ENCODE measurements at regions of chr12 and their contacts with region 1.

Region 1: GRCh38 chr12:62998454-62998853 is 63.5 kb upstream of the PPM1H start:
- DNase-seq: peak; percentile 65 to 80
- H3K4me3 ChIP-seq: no peak overlapping the region
- H3K4me3 Mint-ChIP-seq: peak overlapping the region; percentile 67
- H3K27ac Mint-ChIP-seq: peak overlapping the region; percentile 91
- H3K4me1 ChIP-seq: peaks cover 43% of the 10 kb centered on the region
- H3K4me1 Mint-ChIP-seq: peaks cover 30% of the 10 kb centered on the region
- H3K27me3 ChIP-seq: no peaks in the 10 kb centered on the region
- H3K27me3 Mint-ChIP-seq: no peaks in the 10 kb centered on the region
- CTCF ChIP-seq: no peak

Region 2: DNA sequence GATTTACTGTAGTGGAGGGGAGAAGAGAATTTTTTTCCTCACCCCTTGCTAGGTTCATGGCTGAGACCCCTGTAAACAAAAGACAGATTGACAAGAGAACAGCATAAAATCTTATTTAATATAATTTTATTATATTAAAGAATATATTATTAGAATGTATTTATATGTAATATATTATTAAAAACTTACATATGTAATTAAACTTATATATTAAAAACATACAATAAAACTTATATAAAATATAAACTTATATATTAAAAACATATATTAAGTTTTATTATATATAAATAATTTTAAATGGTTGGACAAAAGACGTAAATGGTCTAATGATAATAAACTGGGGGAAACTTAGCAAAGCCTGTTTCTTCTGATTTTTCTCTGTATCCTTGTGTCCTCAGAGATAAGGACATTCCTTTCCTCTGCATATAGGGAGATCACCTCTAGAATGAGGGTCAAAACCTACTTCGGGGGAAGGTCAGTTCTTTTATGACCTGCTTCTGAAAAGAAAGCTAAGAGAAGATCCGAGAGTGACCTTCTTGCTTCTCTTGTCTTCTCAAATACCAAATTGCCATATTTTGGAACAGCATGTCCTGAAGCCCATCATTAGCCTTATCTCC is 54.6 kb before region 1 on chr12:
- CTCF ChIA-PET with region 1: no interaction called
- POLR2A ChIA-PET with region 1: no interaction called
- intact Hi-C with region 1: no loop called
- DNase-seq: no peak
- H3K4me3 ChIP-seq: no peak overlapping the region
- H3K4me3 Mint-ChIP-seq: no peak overlapping the region
- H3K27ac Mint-ChIP-seq: no peak overlapping the region
- H3K4me1 ChIP-seq: 0 out of 2 replicates have a peak, but pooled peaks cover 9% of the 10 kb centered on the region
- H3K4me1 Mint-ChIP-seq: peaks cover 26% of the 10 kb centered on the region
- H3K27me3 ChIP-seq: no peaks in the 10 kb centered on the region
- H3K27me3 Mint-ChIP-seq: no peaks in the 10 kb centered on the region
- CTCF ChIP-seq: no peak

Region 3: GRCh38 chr12:62983599-62984022 is 14.8 kb before region 1 on chr12:
- CTCF ChIA-PET with region 1: no interaction called
- POLR2A ChIA-PET with region 1: no interaction called
- intact Hi-C with region 1: loop called (anchors 1 kb)
- DNase-seq: no peak
- H3K4me3 ChIP-seq: no peak overlapping the region
- H3K4me3 Mint-ChIP-seq: no peak overlapping the region
- H3K27ac Mint-ChIP-seq: no peak overlapping the region
- H3K4me1 ChIP-seq: peaks cover 34% of the 10 kb centered on the region
- H3K4me1 Mint-ChIP-seq: peaks cover 15% of the 10 kb centered on the region
- H3K27me3 ChIP-seq: no peaks in the 10 kb centered on the region
- H3K27me3 Mint-ChIP-seq: no peaks in the 10 kb centered on the region
- CTCF ChIP-seq: no peak

Measured in Caco-2 (cell line).